Naive thymus-derived CD4-positive, alpha-beta T cell (primary cell): ENCODE measurements at regions of chr19 and their contacts with region 1.

Region 1: DNA sequence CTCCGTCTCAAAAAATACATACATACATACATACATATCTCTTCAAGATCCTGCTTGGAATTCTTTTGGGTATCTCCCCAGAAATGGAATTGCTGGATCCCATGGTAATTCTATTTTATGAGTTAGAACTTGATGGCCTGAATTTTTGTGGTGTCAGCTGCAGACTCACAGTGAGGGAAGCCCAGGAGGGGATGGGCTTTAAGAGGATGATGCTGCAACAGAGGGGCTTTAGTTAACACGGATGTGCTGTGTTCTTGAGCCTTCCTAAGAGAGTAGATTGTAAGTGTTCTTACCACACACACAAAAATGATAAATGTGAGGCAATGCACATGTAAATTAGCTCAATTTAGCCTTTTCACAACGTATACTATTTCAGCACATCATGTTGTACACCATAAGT is 31.8 kb downstream of the CACNG6 start:
- DNase-seq: no peak
- ATAC-seq: no peak
- H3K4me3 ChIP-seq: no peak overlapping the region
- H3K4me3 Mint-ChIP-seq: no peak overlapping the region
- H3K27ac ChIP-seq: no peak overlapping the region
- H3K27ac Mint-ChIP-seq: no peak overlapping the region
- H3K4me1 ChIP-seq: no peaks in the 10 kb centered on the region
- H3K4me1 Mint-ChIP-seq: peaks cover 0 to 8% (median 0%) of the 10 kb centered on the region in 7 donors
- H3K27me3 ChIP-seq: peaks cover 0 to 3% of the 10 kb centered on the region in 2 donors
- H3K27me3 Mint-ChIP-seq: peaks cover 3 to 37% (median 29%) of the 10 kb centered on the region in 5 donors

Region 2: DNA sequence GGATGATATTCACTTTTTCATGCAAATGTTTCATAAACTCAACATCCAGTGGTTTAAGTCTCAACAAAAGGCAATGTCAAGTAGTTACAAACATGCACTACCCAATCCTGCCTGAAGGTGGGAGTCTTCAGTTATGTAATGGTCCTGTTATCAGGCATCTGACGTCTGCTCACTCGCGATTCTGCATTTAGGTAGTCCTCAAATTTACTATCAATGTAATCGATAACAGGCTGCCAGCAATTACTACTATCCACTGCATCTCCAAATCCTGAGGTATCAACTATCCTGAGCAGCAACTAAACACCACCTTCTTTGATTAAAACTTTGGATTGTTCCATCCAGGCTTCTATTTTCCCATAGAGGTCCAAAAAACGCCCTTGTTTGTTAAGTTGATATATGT is 250.2 kb before region 1 on chr19:
- CTCF ChIA-PET with region 1: no interaction called
- POLR2A ChIA-PET with region 1: no interaction called
- intact Hi-C with region 1: loop called in 1 of 2 experiments (anchors 5 kb)
- DNase-seq: peak in 8 of 9 donors; percentile 13 to 43 (median 32)
- ATAC-seq: peak; percentile 54
- H3K4me3 ChIP-seq: no peak overlapping the region
- H3K4me3 Mint-ChIP-seq: no peak overlapping the region
- H3K27ac ChIP-seq: no peak overlapping the region
- H3K27ac Mint-ChIP-seq: no peak overlapping the region
- H3K4me1 ChIP-seq: peaks cover 0 to 3% of the 10 kb centered on the region in 2 donors
- H3K4me1 Mint-ChIP-seq: peaks cover 0 to 5% (median 0%) of the 10 kb centered on the region in 7 donors
- H3K27me3 ChIP-seq: no peaks in the 10 kb centered on the region
- H3K27me3 Mint-ChIP-seq: peaks cover 0 to 15% (median 6%) of the 10 kb centered on the region in 5 donors

Region 3: GRCh38 chr19:53792721-53793433 is 230.3 kb before region 1 on chr19:
- CTCF ChIA-PET with region 1: interaction called, 15 read pairs
- POLR2A ChIA-PET with region 1: no interaction called
- intact Hi-C with region 1: loop called in 1 of 2 experiments (anchors 1 kb)
- DNase-seq: peak; percentile 54 to 76 (median 67)
- ATAC-seq: peak; percentile 100
- H3K4me3 ChIP-seq: no peak overlapping the region
- H3K4me3 Mint-ChIP-seq: no peak overlapping the region
- H3K27ac ChIP-seq: no peak overlapping the region
- H3K27ac Mint-ChIP-seq: no peak overlapping the region
- H3K4me1 ChIP-seq: no peaks in the 10 kb centered on the region
- H3K4me1 Mint-ChIP-seq: peaks cover 0 to 2% (median 0%) of the 10 kb centered on the region in 7 donors
- H3K27me3 ChIP-seq: no peaks in the 10 kb centered on the region
- H3K27me3 Mint-ChIP-seq: peaks cover 0 to 4% (median 0%) of the 10 kb centered on the region in 5 donors

Region 4: DNA sequence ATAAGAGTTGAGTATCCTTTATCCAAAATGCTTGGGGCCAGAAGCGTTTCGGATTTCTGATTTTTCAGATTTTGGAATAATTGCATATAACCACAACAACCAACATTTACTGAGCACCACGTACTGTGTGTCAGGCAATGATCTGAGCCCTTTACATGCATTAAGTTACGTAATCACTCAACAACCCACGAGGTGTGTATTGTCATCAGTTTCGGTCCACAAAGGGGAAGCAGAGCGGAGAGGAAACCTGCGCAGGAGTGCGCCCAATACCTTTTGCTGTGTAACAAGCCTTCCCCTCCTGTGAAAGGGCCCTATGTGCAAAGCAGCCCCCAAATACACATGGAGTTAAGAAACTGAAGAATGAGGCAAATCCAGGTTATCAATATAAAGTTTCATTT is 178.3 kb before region 1 on chr19:
- CTCF ChIA-PET with region 1: interaction called, 9 read pairs
- POLR2A ChIA-PET with region 1: no interaction called
- intact Hi-C with region 1: loop called (anchors 1 kb)
- DNase-seq: no peak
- ATAC-seq: peak; percentile 63
- H3K4me3 ChIP-seq: no peak overlapping the region
- H3K4me3 Mint-ChIP-seq: no peak overlapping the region
- H3K27ac ChIP-seq: no peak overlapping the region
- H3K27ac Mint-ChIP-seq: no peak overlapping the region
- H3K4me1 ChIP-seq: peaks cover 0 to 3% of the 10 kb centered on the region in 2 donors
- H3K4me1 Mint-ChIP-seq: peaks cover 0 to 7% (median 5%) of the 10 kb centered on the region in 7 donors
- H3K27me3 ChIP-seq: peaks cover 0 to 4% of the 10 kb centered on the region in 2 donors
- H3K27me3 Mint-ChIP-seq: peaks cover 18 to 30% (median 23%) of the 10 kb centered on the region in 5 donors

Region 5: DNA sequence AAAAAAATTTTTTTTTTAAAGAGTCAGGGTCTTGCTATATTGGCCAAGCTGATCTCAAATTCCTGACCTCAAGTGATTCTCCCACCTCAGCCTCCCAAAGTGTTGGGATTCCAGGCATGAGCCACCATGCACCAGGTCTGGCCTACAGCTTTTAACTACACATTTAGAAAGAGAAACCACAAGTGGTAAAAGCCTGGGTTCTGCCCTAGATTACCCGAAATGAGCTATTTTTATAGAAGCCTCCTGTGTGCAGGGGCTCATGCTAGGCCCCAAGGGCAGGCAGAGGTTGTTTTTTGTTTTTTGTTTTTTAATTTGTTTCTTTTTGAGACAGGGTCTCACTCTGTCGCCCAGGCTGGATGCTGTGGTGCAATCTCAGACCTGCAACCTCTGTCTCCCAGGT is 169.5 kb before region 1 on chr19:
- CTCF ChIA-PET with region 1: interaction called, 8 read pairs
- POLR2A ChIA-PET with region 1: interaction called, 4 read pairs
- intact Hi-C with region 1: loop called in 1 of 2 experiments (anchors 1 kb)
- DNase-seq: no peak
- ATAC-seq: no peak
- H3K4me3 ChIP-seq: no peak overlapping the region
- H3K4me3 Mint-ChIP-seq: no peak overlapping the region
- H3K27ac ChIP-seq: no peak overlapping the region
- H3K27ac Mint-ChIP-seq: no peak overlapping the region
- H3K4me1 ChIP-seq: no peaks in the 10 kb centered on the region
- H3K4me1 Mint-ChIP-seq: peaks cover 0 to 25% (median 2%) of the 10 kb centered on the region in 7 donors
- H3K27me3 ChIP-seq: peaks cover 0 to 4% of the 10 kb centered on the region in 2 donors
- H3K27me3 Mint-ChIP-seq: peaks cover 20 to 33% (median 23%) of the 10 kb centered on the region in 5 donors

Region 6: DNA sequence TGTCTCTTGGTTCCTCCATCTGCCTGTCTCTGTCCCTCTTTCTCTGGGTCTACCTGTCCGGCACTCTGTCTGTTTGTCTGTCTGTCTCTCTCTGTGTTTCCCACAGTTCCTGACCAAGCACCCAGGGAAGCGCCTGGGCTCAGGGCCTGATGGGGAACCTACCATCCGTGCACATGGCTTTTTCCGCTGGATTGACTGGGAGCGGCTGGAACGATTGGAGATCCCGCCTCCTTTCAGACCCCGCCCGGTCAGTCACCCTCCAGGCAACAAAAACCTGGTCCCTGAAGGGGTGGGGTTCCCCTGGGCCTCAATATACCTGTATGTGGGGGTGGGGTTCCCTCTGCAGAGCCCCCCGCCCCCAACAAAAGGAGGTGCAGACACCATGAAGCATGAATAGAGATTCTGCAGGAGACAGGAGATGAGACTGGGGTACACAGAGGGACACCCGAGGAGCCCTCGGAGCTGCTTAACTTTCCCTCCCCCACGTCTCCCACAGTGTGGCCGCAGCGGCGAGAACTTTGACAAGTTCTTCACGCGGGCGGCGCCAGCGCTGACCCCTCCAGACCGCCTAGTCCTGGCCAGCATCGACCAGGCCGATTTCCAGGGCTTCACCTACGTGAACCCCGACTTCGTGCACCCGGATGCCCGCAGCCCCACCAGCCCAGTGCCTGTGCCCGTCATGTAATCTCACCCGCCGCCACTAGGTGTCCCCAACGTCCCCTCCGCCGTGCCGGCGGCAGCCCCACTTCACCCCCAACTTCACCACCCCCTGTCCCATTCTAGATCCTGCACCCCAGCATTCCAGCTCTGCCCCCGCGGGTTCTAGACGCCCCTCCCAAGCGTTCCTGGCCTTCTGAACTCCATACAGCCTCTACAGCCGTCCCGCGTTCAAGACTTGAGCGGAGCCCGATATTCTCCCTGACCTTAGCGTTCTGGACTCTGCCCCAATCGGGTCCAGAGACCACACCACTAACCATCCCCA is 116.7 kb before region 1 on chr19:
- CTCF ChIA-PET with region 1: no interaction called
- POLR2A ChIA-PET with region 1: no interaction called
- intact Hi-C with region 1: loop called in 1 of 2 experiments (anchors 5 kb)
- DNase-seq: peak; percentile 33 to 78 (median 55)
- ATAC-seq: peak; percentile 80
- H3K4me3 ChIP-seq: no peak overlapping the region
- H3K4me3 Mint-ChIP-seq: peak overlapping the region in 6 of 10 donors; percentile 26 to 87 (median 63)
- H3K27ac ChIP-seq: no peak overlapping the region
- H3K27ac Mint-ChIP-seq: peak overlapping the region in 1 of 9 donors; percentile 10
- H3K4me1 ChIP-seq: peaks cover 5 to 13% of the 10 kb centered on the region in 2 donors
- H3K4me1 Mint-ChIP-seq: peaks cover 21 to 34% (median 28%) of the 10 kb centered on the region in 7 donors
- H3K27me3 ChIP-seq: peaks cover 3 to 34% of the 10 kb centered on the region in 2 donors
- H3K27me3 Mint-ChIP-seq: peaks cover 60 to 91% (median 78%) of the 10 kb centered on the region in 5 donors